ENCODE measurements at regions of chr3 and their contacts with region 1.

Region 1: GRCh38 chr3:148943506-148944205 is 47.7 kb upstream of the GYG1 start:
- DNase-seq: no peak
- H3K4me3 ChIP-seq: no peak overlapping the region
- H3K27ac ChIP-seq: no peak overlapping the region
- H3K4me1 ChIP-seq: no peaks in the 10 kb centered on the region
- H3K27me3 ChIP-seq: no peaks in the 10 kb centered on the region
- CTCF ChIP-seq: peak; percentile 9 to 56 (median 44)

Region 2: DNA sequence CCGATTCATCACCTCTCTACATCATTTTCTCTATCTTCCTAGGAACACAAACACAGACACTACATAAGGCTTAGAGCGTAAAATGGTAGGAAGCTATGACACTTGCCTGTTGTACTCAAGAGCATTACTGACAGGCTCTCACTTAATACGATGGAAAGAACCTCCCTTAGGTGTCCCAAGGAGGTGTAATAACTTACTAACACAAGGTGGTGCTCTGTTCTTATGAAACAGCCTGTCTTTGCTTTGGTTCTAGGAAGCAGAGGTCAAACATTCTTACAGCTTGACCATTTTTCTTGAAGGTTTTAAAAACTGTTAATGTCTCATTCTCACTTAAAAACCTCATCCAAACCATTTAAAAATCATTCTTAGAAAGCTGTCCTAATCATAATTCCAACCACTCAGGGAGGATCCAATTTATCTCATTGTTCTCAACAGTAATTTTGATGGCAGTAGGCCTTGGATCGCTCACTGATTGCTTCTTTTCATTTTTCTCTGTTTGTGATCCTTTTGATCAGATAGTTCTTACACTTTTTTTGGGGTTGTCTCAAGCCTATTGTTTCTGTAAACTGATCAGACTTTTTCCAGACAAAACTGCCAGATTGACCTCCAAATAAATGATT is 563.8 kb before region 1 on chr3:
- intact Hi-C with region 1: loop called (anchors 5 kb)
- DNase-seq: no peak
- H3K4me3 ChIP-seq: no peak overlapping the region
- H3K27ac ChIP-seq: no peak overlapping the region
- H3K4me1 ChIP-seq: no peaks in the 10 kb centered on the region
- H3K27me3 ChIP-seq: no peaks in the 10 kb centered on the region
- CTCF ChIP-seq: peak; percentile 28 to 59 (median 39)

Region 3: DNA sequence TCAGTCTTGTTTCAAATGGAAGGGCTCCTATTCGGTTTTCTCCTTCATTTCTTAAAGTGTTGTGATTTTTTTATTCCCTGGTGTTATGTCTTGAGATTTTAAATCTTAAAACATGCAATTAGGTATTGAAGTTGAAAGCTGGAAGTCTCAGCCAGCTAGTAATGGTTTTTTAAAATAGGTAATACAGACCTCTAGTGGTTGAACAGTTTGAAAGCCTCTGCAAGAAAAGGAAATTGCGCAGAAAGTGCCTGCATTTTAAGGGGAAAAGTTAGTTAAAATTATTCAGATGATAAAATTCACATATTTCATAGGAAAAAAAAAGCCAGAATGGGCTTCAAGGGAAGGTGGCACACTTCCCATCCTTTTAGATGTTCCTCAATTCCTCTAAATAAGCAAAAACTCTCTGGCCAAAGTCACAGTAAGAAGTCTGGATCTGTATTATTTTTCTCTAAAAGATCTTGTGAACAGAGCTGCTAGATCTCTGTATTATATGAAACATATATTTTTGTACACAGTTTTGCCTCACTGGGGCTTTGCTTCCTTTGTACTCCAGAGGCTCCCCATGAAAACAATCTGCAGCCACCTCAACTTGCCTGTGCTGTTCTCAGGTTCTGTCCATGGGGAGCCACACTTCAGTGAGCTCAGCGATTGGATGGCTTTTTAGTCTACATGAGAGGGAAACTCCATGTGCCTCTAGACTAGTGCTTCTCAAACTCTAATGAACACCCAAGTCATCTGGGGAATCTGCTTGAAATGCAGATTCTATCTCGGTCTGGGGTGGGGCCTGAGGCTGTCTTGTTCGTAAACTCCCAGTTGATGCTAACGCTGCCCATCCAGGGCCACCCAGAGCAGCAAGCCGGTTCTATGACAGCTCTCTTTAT is 224.4 kb before region 1 on chr3:
- intact Hi-C with region 1: loop called (anchors 10 kb)
- DNase-seq: no peak
- H3K4me3 ChIP-seq: no peak overlapping the region
- H3K27ac ChIP-seq: no peak overlapping the region
- H3K4me1 ChIP-seq: no peaks in the 10 kb centered on the region
- H3K27me3 ChIP-seq: no peaks in the 10 kb centered on the region
- CTCF ChIP-seq: peak in 2 of 3 experiments; percentile 51 to 66

Region 4: DNA sequence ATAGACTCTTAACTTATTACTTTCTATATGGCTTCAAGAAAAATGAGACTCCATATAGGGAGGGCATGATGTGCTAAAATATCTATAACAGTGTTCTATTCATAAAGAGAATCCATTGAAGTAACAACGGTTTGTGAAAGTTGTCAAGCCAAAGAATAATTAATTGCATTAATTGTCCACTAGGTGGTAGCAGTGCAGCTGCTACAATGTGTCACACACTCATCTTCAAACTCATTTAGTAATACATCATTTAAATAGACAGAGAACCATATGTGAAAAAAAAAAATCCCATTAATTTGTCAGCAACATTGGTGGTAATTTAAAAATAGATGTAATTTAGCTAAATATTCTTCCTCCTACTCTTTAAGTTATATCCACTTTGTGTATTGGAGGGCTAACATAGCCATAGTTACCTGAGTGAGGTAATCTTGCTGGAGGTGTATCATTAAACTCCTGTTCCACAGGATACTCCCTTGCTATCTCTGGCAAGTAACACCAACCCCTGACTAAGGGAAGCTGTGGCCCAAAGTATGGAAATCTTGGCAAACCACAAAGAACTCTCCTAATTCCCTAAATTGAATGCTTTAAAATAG is 82.3 kb before region 1 on chr3:
- intact Hi-C with region 1: loop called (anchors 1 kb)
- DNase-seq: no peak
- H3K4me3 ChIP-seq: no peak overlapping the region
- H3K27ac ChIP-seq: no peak overlapping the region
- H3K4me1 ChIP-seq: no peaks in the 10 kb centered on the region
- H3K27me3 ChIP-seq: no peaks in the 10 kb centered on the region
- CTCF ChIP-seq: peak; percentile 32 to 72 (median 65)